PC-3 (cell line): ENCODE measurements at regions of chr1 and their contacts with region 1.

Region 1: GRCh38 chr1:182446033-182446669 is 3.8 kb upstream of the RGSL1 start:
- DNase-seq: peak; percentile 57
- ATAC-seq: peak; percentile 37
- H3K4me3 ChIP-seq: peak overlapping the region; percentile 19; the same call in 1 of the 2 replicates
- H3K27ac ChIP-seq: no peak overlapping the region
- H3K4me1 ChIP-seq: no peaks in the 10 kb centered on the region
- H3K27me3 ChIP-seq: 0 out of 2 replicates have a peak, but pooled peaks cover 7% of the 10 kb centered on the region
- CTCF ChIP-seq: peak; percentile 72

Region 2: GRCh38 chr1:181088079-181089016 is 1357.8 kb before region 1 on chr1 and contains the start of gene IER5:
- CTCF ChIA-PET with region 1: no interaction called
- POLR2A ChIA-PET with region 1: no interaction called
- intact Hi-C with region 1: no loop called
- DNase-seq: peak; percentile 95
- ATAC-seq: peak; percentile 72
- H3K4me3 ChIP-seq: peak within 1 kb of the TSS; percentile 99
- H3K27ac ChIP-seq: peak within 1 kb of the TSS; percentile 90
- H3K4me1 ChIP-seq: peaks cover 18% of the 10 kb centered on the region
- H3K27me3 ChIP-seq: no peaks in the 10 kb centered on the region
- CTCF ChIP-seq: no peak
- total RNA-seq, gene IER5: 100 and 126 TPM in 2 replicates

Region 3: GRCh38 chr1:182595641-182596240 is 149.6 kb after region 1 on chr1:
- CTCF ChIA-PET with region 1: no interaction called
- POLR2A ChIA-PET with region 1: no interaction called
- intact Hi-C with region 1: loop called (anchors 1 kb)
- DNase-seq: peak; percentile 63
- ATAC-seq: peak; percentile 35; the same call in 1 of the 2 replicates
- H3K4me3 ChIP-seq: no peak overlapping the region
- H3K27ac ChIP-seq: no peak overlapping the region
- H3K4me1 ChIP-seq: peaks cover 7% of the 10 kb centered on the region
- H3K27me3 ChIP-seq: no peaks in the 10 kb centered on the region
- CTCF ChIP-seq: peak; percentile 77